Sigmoid colon (tissue), 7 donors: ENCODE measurements at regions of chr4 and their contacts with region 1.

Region 1: DNA sequence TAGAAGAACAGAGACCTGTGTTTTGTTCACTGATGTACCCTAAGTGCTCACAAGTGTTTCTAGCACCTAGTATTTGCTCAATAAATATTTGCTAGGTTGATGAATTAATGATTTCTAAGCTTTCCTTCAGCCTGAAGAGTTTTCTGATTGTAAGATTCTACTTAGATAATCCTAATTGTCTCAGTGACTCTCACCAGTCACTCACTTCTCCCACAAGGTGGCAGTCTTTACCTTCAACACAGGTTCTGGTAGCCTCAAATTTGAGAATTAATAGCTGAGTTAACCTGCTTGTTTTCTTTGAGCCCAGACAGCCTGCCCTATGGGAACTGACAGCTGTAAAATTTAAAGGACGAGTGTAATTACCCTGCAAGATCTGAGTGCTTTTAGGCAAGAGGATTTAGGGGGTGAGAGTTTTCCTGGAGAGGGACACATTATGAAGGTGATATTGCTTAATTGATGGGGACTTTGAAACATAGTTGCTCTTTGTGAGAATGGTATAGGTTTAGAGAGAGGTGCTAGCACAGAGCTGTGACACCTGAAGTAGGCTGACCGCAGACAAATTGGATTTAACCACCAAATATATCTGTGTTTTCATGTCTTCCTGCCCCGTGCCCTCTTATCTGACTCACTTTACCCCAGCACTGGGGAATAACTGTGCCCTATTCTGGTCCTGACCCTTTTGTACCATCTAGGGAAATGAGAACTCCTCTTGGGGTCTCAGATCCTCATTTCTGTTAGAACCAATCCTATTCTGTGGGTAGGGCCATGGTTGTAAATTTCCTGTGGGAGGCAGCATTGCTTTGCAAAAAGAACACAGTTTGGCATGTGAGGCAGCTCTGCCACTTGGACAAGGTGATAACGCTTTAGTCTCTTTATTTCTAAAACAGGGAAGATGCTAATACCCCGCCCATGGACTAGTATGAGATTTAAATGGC is 27.7 kb downstream of the CD38 start:
- DNase-seq: no peak
- H3K4me3 ChIP-seq: no peak overlapping the region
- H3K27ac ChIP-seq: no peak overlapping the region
- H3K4me1 ChIP-seq: no peaks in the 10 kb centered on the region
- H3K27me3 ChIP-seq: no peaks in the 10 kb centered on the region
- CTCF ChIP-seq: peak in 3 of 4 experiments; percentile 41 to 60 (median 41)
- EP300 ChIP-seq: no peak
- POLR2A ChIP-seq: no peak

Region 2: DNA sequence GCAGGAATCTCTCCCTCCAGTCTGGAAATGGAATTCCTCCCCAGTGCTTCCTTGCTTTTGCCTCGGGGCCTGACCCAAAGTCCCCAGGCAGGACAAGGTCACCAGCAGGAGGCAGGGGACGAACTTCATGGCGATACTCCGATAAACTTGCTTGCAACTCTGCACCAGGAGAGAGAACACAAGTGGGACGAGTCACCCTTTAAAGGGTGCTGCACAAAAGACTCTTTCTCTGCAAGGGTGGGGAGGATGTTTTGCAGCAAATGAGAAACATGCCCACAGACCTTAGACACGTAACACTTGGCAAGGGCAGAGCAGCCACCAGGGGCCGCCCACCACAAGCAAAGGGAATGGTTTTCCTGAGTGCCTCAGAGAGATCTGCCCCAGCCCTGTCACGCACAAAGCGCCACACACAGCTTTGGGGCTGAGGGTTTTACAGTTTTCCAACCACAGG is 157.2 kb after region 1 on chr4 and contains the start of gene FGFBP2:
- intact Hi-C with region 1: loop called (anchors 5 kb)
- DNase-seq: peak; percentile 71
- H3K4me3 ChIP-seq: no peak within 1 kb of the TSS
- H3K27ac ChIP-seq: no peak within 1 kb of the TSS
- H3K4me1 ChIP-seq: peaks cover 0 to 6% (median 0%) of the 10 kb centered on the region in 4 donors
- H3K27me3 ChIP-seq: no peaks in the 10 kb centered on the region
- CTCF ChIP-seq: peak in 3 of 4 experiments; percentile 23 to 37 (median 31)
- EP300 ChIP-seq: no peak
- POLR2A ChIP-seq: no peak
- total RNA-seq, gene FGFBP2: 3.8 to 17.1 (median 7.6) TPM